Gastrocnemius medialis (tissue), 4 donors: ENCODE measurements at regions of chr5 and their contacts with region 1.

Region 1: DNA sequence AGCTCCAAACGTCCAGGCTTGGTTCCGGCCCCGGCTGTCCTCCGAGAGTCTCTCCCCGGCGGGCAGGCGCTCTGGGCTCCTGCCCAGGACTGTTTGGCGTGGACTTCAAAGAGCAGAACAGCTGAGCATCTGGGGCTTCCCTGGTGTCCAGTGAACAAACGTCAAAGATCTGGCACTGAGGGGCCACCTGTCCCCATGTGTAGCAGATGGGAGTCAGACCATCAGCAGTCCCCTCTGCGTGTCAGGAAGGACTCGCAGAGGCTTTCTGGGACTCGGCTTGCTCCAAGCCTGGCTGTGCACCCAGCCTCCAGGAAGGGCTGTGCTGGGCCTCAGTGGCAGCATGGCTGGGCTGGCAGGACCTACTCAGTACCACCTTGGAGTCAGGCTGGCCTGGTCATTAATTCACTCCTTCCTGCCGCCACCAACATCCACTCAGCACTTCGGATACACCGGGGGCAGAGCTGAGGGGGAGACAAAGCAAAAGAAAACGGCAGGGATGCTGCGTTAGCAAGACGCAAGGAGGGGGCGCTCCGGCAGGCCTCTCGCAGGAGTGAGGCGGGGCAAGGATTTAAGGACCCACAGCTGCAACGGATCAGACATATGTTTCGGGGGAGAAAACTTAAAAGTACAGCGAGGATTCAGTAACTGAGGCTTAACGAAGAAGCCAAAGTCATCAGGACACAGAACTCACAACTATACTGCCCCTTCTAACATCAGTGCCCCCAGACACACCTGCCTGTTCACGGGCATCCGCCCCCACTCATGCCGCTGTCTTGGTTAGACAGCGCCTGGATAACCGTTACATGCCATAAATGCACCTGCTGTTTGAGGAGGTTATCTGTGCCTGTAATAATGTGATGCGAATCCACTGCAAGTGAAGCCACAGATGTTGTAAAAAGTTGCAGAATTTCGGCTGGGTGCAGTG is 164.5 kb upstream of the PHYKPL start:
- DNase-seq: peak; percentile 76 to 88
- ATAC-seq: peak; percentile 94 to 98
- H3K4me3 ChIP-seq: peak overlapping the region in 2 of 4 donors; percentile 3 to 14
- H3K27ac ChIP-seq: peak overlapping the region; percentile 65 to 76 (median 70)
- H3K4me1 ChIP-seq: peaks cover 0 to 11% of the 10 kb centered on the region in 2 donors
- H3K27me3 ChIP-seq: peaks cover 0 to 7% (median 0%) of the 10 kb centered on the region in 3 donors
- CTCF ChIP-seq: no peak
- POLR2A ChIP-seq: peak; percentile 23 to 46

Region 2: DNA sequence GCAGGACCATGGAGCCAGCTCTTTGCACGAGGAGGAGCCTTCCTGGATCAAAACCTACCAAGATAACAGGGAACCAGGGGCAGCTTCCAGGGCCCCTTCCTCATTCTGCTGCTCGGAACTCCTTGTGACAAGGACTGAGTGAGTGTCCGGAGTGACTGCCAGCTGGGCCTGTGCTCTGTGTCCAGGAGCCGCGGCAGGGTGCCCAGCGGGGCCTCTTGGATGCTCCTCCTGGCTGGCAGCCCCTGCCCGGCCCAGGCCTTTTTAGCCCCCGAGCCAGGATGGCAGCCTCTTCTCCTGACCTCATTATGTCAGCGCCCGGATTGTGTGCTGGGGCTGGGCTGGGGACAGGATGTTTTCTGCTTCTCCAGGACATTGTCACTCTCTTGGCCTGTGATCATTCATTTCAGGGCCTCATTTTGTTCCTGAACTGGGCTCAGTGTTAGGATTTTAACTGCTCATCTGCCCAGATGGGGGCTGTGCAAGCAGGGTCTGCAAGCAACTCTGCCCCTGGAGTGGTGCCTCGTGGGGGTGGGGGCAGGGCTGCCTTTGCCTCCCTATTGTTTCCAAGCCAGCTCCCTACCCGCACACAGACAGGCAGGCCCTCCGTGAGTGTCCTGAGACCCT is 31.4 kb after region 1 on chr5:
- in situ Hi-C with region 1: no loop called
- intact Hi-C with region 1: loop called (anchors 2 kb)
- DNase-seq: peak; percentile 90 to 94
- ATAC-seq: peak; percentile 87 to 90
- H3K4me3 ChIP-seq: no peak overlapping the region
- H3K27ac ChIP-seq: peak overlapping the region; percentile 87 to 98 (median 92)
- H3K4me1 ChIP-seq: peaks cover 19 to 28% of the 10 kb centered on the region in 2 donors
- H3K27me3 ChIP-seq: no peaks in the 10 kb centered on the region
- CTCF ChIP-seq: no peak
- POLR2A ChIP-seq: peak; percentile 23 to 39

Region 3: GRCh38 chr5:178527458-178528307 is 130.6 kb after region 1 on chr5:
- in situ Hi-C with region 1: no loop called
- intact Hi-C with region 1: loop called (anchors 10 kb)
- DNase-seq: peak; percentile 87 to 91
- ATAC-seq: peak; percentile 86 to 91
- H3K4me3 ChIP-seq: no peak overlapping the region
- H3K27ac ChIP-seq: peak overlapping the region; percentile 60 to 91 (median 76)
- H3K4me1 ChIP-seq: peaks cover 19 to 30% of the 10 kb centered on the region in 2 donors
- H3K27me3 ChIP-seq: no peaks in the 10 kb centered on the region
- CTCF ChIP-seq: no peak
- POLR2A ChIP-seq: no peak